Naive thymus-derived CD8-positive, alpha-beta T cell (primary cell): ENCODE measurements at regions of chr22 and their contacts with region 1.

Region 1: DNA sequence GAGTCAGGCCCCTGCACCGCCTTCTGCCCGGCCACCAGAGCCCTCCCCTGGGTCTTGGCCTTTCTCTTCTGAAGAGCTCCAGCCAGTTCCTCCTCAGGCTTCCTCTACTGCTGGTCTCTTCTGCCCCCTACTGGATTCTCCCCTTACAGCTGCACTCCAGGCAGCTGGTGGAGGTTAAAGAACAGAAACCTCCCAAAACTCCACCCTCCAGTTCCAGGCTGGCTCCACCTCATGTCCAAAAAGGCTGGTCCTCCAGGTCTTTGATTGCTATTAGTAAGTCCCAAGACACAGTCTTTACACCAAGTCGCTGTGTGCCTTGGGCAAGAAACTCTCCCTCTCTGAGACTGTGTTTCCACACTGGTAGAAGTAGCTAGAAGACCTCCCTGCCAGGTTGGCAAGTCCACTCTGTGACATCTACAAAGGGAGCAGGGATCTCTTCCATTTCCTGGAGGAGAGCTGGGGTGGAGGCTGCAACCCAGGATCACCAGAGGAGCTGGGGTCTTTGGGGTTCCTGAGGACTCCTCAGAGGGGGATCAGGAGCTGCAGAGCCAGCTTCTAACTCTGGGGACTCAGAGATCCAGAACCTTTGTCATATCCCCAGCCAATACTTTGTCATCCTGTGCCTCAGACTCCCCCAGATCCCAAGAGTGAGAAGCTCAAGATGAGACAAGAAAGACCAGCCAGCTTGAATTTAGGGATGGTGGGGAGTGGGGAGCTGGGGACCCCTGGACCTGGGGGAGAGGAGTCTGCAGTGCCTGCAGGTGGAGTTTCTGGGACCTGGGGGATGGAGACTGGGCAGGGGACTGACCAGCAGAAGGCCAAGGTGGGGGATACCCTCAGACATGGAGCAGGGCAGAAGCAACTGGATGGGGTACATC is 3.4 kb upstream of the IGLL5 start:
- DNase-seq: peak; percentile 31 to 81 (median 68)
- ATAC-seq: peak; percentile 79 to 81
- H3K4me3 Mint-ChIP-seq: no peak overlapping the region
- H3K27ac Mint-ChIP-seq: peak overlapping the region in 1 of 10 donors; percentile 59
- H3K4me1 Mint-ChIP-seq: peaks cover 4 to 52% (median 4%) of the 10 kb centered on the region in 4 donors
- H3K27me3 Mint-ChIP-seq: peaks cover 2 to 12% (median 7%) of the 10 kb centered on the region in 5 donors

Region 2: DNA sequence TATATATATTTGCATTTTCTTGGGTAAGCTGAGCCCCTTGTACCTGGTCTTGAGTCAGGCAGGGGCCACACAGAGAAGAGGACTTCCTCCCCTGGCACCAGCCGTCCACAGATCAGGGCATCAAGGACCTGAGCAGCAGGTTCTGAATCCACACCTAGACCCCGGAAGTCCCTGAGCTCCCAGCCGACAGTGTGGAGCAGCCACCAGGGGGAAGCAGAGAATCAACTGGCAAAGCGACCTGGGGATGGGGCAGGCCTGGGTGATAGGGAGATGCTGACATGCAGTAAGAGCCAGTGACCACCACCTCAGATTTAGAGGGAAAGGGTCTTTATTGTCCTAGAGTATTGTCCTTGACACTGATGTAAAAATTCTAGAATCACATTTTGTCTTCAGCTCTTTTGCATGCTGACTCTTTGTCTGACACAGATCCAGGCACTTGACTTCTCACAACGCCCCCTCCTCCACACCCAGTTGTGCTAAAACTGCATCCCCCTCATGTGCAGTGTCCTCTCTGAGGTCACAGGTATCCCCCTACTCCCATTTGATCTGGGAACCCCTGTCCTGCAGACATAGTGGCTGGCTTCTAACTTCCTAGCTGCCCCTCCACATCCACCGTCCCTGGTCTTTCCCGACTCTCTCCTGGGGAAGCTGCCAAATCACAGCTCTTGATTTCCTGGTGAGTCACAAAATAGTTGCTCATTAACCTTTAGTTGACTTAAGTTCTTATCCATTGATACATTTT is 130.6 kb before region 1 on chr22:
- POLR2A ChIA-PET with region 1: interaction called, 17 read pairs
- DNase-seq: peak; percentile 61 to 86 (median 74)
- ATAC-seq: peak; percentile 92 to 94
- H3K4me3 Mint-ChIP-seq: peak overlapping the region in 9 of 10 donors; percentile 37 to 76 (median 62)
- H3K27ac Mint-ChIP-seq: peak overlapping the region; percentile 78 to 98 (median 94)
- H3K4me1 Mint-ChIP-seq: peaks cover 14 to 64% (median 60%) of the 10 kb centered on the region in 4 donors
- H3K27me3 Mint-ChIP-seq: no peaks in the 10 kb centered on the region

Region 3: DNA sequence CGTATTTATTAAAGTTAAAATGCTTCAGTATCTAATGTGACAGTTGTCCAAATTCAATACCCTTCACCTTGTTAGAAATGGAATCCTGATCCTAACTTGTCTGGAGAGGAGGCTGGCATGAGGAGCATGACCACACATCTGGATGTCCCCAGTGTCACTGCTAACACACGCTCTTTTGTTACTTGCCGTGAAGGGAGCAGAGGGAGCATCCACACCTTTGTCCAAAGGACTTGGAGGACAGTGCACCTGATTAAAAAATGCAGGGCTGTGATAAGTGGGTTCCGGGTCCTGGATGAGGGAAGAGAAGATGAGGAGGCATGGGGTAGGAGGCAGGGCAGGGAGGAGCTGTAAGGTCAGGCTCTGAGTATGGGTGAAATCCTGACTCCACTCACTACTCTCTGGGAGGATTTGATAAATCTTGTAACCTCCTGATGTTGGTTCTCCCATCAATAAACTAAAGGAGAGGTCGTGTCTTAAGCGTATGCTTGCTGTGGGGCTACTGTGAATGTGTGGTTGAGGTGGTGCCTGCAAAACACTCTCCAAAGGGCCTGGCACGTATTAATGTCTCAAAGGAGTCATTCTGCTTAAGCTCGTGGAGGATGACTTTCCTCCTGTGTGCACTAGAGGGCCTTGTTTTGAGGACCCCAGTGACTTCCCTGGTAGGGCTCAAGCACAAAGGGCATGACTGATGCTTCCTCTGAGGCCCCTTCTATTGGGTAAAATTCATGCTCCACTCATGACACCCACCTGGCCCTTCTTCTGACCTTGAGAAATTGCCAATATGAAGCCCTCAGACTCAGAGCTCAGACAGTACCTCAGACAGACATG is 13.5 kb before region 1 on chr22:
- POLR2A ChIA-PET with region 1: no interaction called
- DNase-seq: no peak
- ATAC-seq: peak in 1 of 2 donors; percentile 17
- H3K4me3 Mint-ChIP-seq: no peak overlapping the region
- H3K27ac Mint-ChIP-seq: peak overlapping the region in 2 of 10 donors; percentile 22 to 48
- H3K4me1 Mint-ChIP-seq: peaks cover 11 to 49% (median 20%) of the 10 kb centered on the region in 4 donors
- H3K27me3 Mint-ChIP-seq: no peaks in the 10 kb centered on the region